ENCODE measurements at regions of chr3 and their contacts with region 1.

Region 1: DNA sequence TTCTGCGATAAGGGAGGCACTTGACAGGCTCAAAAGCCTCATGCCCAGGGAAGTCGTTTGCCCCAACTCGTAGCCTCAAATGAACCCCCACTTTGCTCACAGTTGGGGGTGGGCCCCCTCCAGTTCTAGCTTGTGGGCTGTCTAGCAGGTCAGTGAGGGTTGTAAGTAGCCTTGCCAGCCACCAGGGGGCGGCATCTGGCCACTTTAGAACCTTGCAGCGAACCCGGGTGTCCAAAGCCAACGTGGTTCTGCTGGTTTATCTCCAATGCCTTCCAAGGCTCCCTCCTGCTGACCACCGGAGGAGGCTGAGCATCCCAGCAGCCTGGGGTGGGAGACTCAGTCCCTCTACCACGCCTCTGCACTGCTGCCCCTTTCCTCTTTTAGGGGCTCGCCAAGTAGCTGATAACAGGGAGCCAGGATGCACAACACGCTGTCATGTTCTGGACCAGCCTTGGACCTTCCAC is 9.2 kb upstream of the RBSN start:
- DNase-seq: peak; percentile 51 to 78 (median 63)
- ATAC-seq: peak; percentile 97
- H3K4me3 ChIP-seq: no peak overlapping the region
- H3K4me3 Mint-ChIP-seq: peak overlapping the region in 1 of 10 donors; percentile 29
- H3K27ac ChIP-seq: no peak overlapping the region
- H3K27ac Mint-ChIP-seq: peak overlapping the region in 2 of 9 donors; percentile 31 to 38
- H3K4me1 ChIP-seq: peaks cover 3 to 5% of the 10 kb centered on the region in 2 donors
- H3K4me1 Mint-ChIP-seq: peaks cover 3 to 9% (median 6%) of the 10 kb centered on the region in 7 donors
- H3K27me3 ChIP-seq: no peaks in the 10 kb centered on the region
- H3K27me3 Mint-ChIP-seq: peaks cover 4 to 17% (median 5%) of the 10 kb centered on the region in 5 donors

Region 2: GRCh38 chr3:15405448-15406050 is 297.4 kb after region 1 on chr3:
- CTCF ChIA-PET with region 1: interaction called, 10 read pairs
- POLR2A ChIA-PET with region 1: no interaction called
- intact Hi-C with region 1: loop called (anchors 1 to 5 kb)
- DNase-seq: peak in 7 of 9 donors; percentile 28 to 63 (median 49)
- ATAC-seq: peak; percentile 75
- H3K4me3 ChIP-seq: no peak overlapping the region
- H3K4me3 Mint-ChIP-seq: no peak overlapping the region
- H3K27ac ChIP-seq: no peak overlapping the region
- H3K27ac Mint-ChIP-seq: no peak overlapping the region
- H3K4me1 ChIP-seq: peaks cover 0 to under 1% of the 10 kb centered on the region in 2 donors
- H3K4me1 Mint-ChIP-seq: peaks cover 0 to 7% (median 1%) of the 10 kb centered on the region in 7 donors
- H3K27me3 ChIP-seq: no peaks in the 10 kb centered on the region
- H3K27me3 Mint-ChIP-seq: no peaks in the 10 kb centered on the region